T-cell (primary cell): ENCODE measurements at regions of chr16 and their contacts with region 1.

Region 1: DNA sequence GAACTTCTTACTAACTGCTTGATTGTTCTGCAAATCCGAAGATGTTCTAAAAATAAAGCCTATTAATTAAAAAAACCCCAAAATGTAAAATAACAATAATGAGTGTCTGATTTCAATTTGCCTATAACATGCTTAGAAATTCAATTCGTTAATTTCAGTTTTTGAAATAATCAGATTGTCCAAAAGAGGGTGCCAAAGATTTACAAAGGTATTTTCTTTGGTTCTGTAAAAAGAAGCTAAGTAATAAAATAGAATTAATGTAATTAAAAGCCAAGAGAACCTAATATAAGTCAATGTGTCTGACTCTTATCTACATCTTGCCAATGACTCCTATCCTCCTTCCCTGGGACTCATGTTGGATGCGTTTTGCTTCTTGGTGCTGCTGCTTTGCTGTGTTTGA is 75.0 kb upstream of the CPHXL start:
- DNase-seq: no peak
- ATAC-seq: no peak
- H3K4me3 ChIP-seq: no peak overlapping the region
- H3K4me3 Mint-ChIP-seq: no peak overlapping the region
- H3K27ac ChIP-seq: no peak overlapping the region
- H3K27ac Mint-ChIP-seq: no peak overlapping the region
- H3K4me1 ChIP-seq: no peaks in the 10 kb centered on the region
- H3K4me1 Mint-ChIP-seq: no peaks in the 10 kb centered on the region
- H3K27me3 ChIP-seq: peaks cover 0 to 8% of the 10 kb centered on the region in 2 experiments
- H3K27me3 Mint-ChIP-seq: peaks cover 24 to 25% of the 10 kb centered on the region in 2 donors

Region 2: DNA sequence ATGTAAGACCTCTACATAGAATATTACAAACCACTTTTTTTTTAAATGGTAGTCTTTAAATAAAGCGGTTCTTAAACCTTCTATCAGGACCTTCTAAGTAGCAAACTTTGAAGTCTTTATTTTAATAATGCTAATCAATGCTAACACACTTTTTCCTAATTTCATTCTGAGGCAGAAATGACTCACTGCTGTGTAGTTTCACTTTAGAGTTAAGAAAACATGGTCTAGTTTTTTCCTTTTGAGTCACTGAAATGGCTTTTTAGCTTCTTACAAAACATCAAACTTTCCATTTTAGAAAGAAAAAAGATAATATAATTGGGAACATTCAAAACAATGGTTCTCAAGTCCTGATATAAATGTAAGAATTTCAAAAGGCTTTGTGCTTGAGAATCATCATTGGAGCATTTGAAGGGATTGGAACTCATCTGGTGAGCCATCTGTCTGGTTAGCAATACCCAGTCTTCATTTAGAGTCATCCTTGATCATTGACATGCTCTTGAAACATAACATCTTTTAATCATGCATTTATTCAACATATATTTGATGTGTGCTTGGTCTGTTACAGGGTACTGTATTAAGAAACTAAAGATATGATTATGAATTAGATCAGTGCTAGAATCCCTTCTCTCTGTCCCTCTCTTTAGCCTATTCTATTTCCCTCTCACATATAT is 1131.4 kb after region 1 on chr16:
- CTCF ChIA-PET with region 1: interaction called in 1 of 2 experiments, 11 read pairs
- POLR2A ChIA-PET with region 1: no interaction called
- DNase-seq: no peak
- ATAC-seq: no peak
- H3K4me3 ChIP-seq: no peak overlapping the region
- H3K4me3 Mint-ChIP-seq: no peak overlapping the region
- H3K27ac ChIP-seq: no peak overlapping the region
- H3K27ac Mint-ChIP-seq: no peak overlapping the region
- H3K4me1 ChIP-seq: no peaks in the 10 kb centered on the region
- H3K4me1 Mint-ChIP-seq: no peaks in the 10 kb centered on the region
- H3K27me3 ChIP-seq: no peaks in the 10 kb centered on the region
- H3K27me3 Mint-ChIP-seq: no peaks in the 10 kb centered on the region